Left lung (tissue), 14 donors: ENCODE measurements at regions of chr15 and their contacts with region 1.

Region 1: GRCh38 chr15:72199711-72200212 is 2.2 kb upstream of the GRAMD2A start:
- DNase-seq: peak in 3 of 4 donors; percentile 64 to 79 (median 73)
- ATAC-seq: peak; percentile 67
- H3K4me3 ChIP-seq: no peak overlapping the region
- H3K27ac ChIP-seq: peak overlapping the region; percentile 10 to 68
- H3K4me1 ChIP-seq: peaks cover 12 to 54% of the 10 kb centered on the region in 2 donors
- H3K27me3 ChIP-seq: peaks cover 0 to 27% of the 10 kb centered on the region in 2 donors
- CTCF ChIP-seq: peak; percentile 89 to 93

Region 2: DNA sequence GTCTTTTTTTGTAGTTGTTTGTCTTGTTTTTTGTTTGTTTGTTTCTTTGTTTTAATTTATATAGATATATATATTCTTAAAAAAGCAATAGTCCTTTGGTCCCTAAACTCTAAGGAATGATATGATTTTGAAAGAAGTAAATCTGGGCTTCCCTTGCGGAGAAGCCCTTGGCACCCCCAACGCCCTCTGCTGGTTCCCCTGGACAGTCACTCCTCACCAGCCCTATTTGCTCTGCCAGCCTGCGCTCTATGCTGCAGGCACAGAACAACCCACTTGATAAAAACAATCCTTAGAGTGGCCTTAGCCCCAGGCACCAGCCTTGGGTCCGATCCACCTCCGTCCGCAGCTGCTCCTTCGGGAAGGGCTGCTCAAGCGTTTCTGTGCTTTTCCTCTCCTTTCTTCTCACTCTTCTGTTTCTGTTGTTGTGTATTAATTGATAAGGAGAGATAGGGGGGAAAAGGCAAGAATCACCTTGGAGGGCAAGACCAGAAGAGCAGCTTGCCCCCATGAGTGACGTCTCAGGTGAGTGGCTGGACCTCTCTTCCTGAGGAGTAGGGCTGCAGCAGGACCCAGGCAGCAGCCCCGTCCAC is 86.3 kb after region 1 on chr15:
- intact Hi-C with region 1: loop called in 1 of 2 experiments (anchors 10 kb)
- DNase-seq: peak in 3 of 4 donors; percentile 28 to 85 (median 54)
- ATAC-seq: peak; percentile 95
- H3K4me3 ChIP-seq: no peak overlapping the region
- H3K27ac ChIP-seq: no peak overlapping the region
- H3K4me1 ChIP-seq: no peaks in the 10 kb centered on the region
- H3K27me3 ChIP-seq: no peaks in the 10 kb centered on the region
- CTCF ChIP-seq: peak; percentile 45 to 67